Uterus (tissue), 4 donors: ENCODE measurements at regions of chr5 and their contacts with region 1.

Region 1: GRCh38 chr5:78359831-78360673 is at the start of gene SCAMP1:
- DNase-seq: peak; percentile 88 to 95
- H3K4me3 ChIP-seq: peak within 1 kb of the TSS; percentile 91 to 92
- H3K27ac ChIP-seq: peak within 1 kb of the TSS; percentile 83 to 89
- H3K4me1 ChIP-seq: peaks cover 0 to 5% of the 10 kb centered on the region in 2 donors
- H3K27me3 ChIP-seq: no peaks in the 10 kb centered on the region
- CTCF ChIP-seq: peak in 3 of 4 experiments; percentile 53 to 84 (median 64)
- POLR2A ChIP-seq: peak; percentile 52 to 91
- total RNA-seq, gene SCAMP1: 14.9 to 94.1 (median 58.6) TPM

Region 2: GRCh38 chr5:78294248-78295034 is 65.6 kb before region 1 on chr5 and contains the start of gene AP3B1:
- intact Hi-C with region 1: loop called (anchors 2 kb)
- DNase-seq: peak; percentile 98 to 99
- H3K4me3 ChIP-seq: peak within 1 kb of the TSS; percentile 81 to 91
- H3K27ac ChIP-seq: peak within 1 kb of the TSS; percentile 82 to 89
- H3K4me1 ChIP-seq: peaks cover 0 to 4% of the 10 kb centered on the region in 2 donors
- H3K27me3 ChIP-seq: no peaks in the 10 kb centered on the region
- CTCF ChIP-seq: peak in 3 of 4 experiments; percentile 8 to 46 (median 22)
- POLR2A ChIP-seq: peak; percentile 72 to 95
- total RNA-seq, gene AP3B1: 15.9 to 67.1 (median 33.4) TPM